Activated CD8-positive, alpha-beta T cell treated with anti-CD3 and anti-CD28 coated beads for 36 hours (primary cell): ENCODE measurements at regions of chr2 and their contacts with region 1.

Region 1: DNA sequence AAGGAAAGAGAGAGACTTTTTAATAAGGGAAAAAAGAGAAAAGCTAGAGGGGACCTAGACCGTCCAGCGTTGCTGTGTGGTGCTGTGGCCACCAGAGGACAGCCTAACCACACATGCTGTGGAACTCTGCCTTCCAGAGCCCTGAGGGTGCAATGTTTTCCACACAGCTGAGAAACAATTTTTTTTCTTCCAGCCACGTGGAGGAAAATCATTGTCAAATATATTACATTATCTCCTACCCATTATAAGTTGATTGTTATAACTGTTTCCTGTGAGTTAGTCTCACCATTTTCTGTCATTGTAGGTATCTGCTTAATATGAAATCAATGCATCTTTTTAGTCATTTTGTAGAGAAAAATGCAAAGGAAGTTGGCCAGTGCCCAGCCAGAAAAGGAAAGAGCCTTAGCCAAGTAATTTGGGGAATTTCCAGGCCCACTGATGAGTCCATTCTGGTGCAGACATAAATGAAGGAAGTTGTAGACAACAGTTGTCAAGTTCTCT is 5.9 kb upstream of the MRPL19 start:
- DNase-seq: peak; percentile 77
- ATAC-seq: peak; percentile 100
- H3K4me3 Mint-ChIP-seq: no peak overlapping the region
- H3K27ac Mint-ChIP-seq: no peak overlapping the region
- H3K4me1 Mint-ChIP-seq: peaks cover 6% of the 10 kb centered on the region
- H3K27me3 Mint-ChIP-seq: peaks cover 16% of the 10 kb centered on the region
- CTCF ChIP-seq: peak; percentile 92

Region 2: DNA sequence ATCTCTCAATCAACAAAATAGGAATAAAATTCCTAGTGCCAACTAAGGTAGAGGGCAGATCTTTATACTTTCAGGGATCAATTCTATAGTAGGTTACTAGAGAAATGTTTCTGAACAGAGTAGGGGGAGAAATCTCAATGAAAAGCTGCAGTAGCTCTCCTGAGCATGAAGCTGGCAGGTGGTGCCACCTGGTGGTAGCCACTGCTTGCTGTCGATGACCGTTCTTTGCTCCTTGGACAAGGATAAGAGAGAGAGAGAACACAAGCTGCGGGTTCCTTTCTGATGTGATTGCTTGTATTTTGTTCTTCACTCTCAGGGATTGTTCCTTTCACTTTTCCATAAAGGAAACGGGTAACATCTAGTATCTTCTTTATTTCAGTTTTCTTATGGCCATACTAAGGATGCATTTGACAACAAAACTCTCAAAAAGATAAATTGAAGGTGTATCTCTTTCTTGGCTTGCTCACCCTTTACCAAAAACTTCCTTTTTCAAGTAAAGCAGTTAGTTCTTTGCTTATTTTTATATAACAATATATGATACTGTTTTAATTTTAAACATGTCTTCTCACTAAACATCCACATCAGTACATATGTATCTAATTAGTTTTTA is 12.7 kb before region 1 on chr2:
- CTCF ChIA-PET with region 1: interaction called, 34 read pairs
- POLR2A ChIA-PET with region 1: no interaction called
- intact Hi-C with region 1: no loop called
- DNase-seq: peak; percentile 82
- ATAC-seq: peak; percentile 80
- H3K4me3 Mint-ChIP-seq: no peak overlapping the region
- H3K27ac Mint-ChIP-seq: no peak overlapping the region
- H3K4me1 Mint-ChIP-seq: no peaks in the 10 kb centered on the region
- H3K27me3 Mint-ChIP-seq: peaks cover 25% of the 10 kb centered on the region
- CTCF ChIP-seq: peak; percentile 76

Region 3: DNA sequence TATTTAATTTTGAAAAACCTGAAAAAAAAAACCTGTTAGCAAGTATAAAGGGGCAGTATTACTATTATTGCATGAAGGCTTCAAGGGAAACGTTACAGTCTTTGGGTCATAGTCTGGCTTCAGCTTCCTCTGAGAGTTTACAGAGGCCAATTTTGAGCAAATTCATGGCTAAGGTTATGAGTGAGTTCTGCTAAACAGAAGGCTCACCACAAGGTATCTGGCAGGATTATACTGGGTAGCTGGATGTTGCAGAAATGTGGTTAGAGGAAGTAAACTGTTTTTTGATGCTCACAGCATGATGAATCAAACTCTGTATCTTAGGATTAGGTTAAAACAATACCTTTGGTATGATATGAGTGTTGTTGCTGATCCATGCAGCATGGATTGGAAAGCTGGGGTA is 15.2 kb after region 1 on chr2:
- CTCF ChIA-PET with region 1: interaction called, 15 read pairs
- POLR2A ChIA-PET with region 1: no interaction called
- intact Hi-C with region 1: no loop called
- DNase-seq: no peak
- ATAC-seq: no peak
- H3K4me3 Mint-ChIP-seq: no peak overlapping the region
- H3K27ac Mint-ChIP-seq: no peak overlapping the region
- H3K4me1 Mint-ChIP-seq: peaks cover 24% of the 10 kb centered on the region
- H3K27me3 Mint-ChIP-seq: no peaks in the 10 kb centered on the region
- CTCF ChIP-seq: no peak

Region 4: DNA sequence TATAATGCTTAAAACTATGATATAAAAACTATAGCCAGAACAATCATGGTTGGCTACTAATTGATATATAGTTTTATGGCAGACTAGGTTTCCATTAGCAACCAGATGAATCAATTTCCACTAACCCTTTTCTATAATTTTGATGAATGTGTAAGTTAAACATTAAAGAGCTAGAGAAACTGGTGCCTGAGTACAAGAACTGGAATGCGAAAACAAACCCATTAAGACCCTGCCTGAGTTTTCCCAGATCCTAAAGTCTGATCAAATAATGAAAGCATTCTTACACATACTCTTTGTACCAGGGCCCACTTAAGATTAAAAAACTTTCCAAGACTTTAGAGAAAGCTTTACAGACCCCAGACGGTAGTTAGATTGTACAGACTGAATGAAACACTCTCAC is 27.2 kb after region 1 on chr2:
- CTCF ChIA-PET with region 1: interaction called, 11 read pairs
- POLR2A ChIA-PET with region 1: no interaction called
- intact Hi-C with region 1: no loop called
- DNase-seq: no peak
- ATAC-seq: no peak
- H3K4me3 Mint-ChIP-seq: no peak overlapping the region
- H3K27ac Mint-ChIP-seq: no peak overlapping the region
- H3K4me1 Mint-ChIP-seq: no peaks in the 10 kb centered on the region
- H3K27me3 Mint-ChIP-seq: no peaks in the 10 kb centered on the region
- CTCF ChIP-seq: no peak

Region 5: DNA sequence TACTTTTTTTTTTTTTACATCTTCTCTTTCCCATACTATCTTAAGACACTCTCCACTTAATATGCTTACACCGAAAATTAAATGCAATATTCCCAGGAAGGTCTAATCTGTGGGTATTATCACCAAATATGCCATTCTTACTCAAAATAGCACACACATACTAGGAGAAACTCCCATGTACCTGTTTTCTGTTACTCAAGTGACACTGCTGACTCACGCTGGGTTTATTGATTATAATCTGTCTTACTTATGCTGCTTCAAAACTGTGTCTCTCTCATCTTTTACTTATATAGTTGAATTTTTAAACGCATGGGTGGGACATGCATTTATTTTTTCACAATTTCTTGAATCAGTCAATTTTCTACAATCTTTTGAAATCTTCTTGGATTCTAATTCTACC is 35.8 kb after region 1 on chr2:
- CTCF ChIA-PET with region 1: interaction called, 64 read pairs
- POLR2A ChIA-PET with region 1: no interaction called
- intact Hi-C with region 1: loop called (anchors 5 kb)
- DNase-seq: no peak
- ATAC-seq: no peak
- H3K4me3 Mint-ChIP-seq: no peak overlapping the region
- H3K27ac Mint-ChIP-seq: no peak overlapping the region
- H3K4me1 Mint-ChIP-seq: peaks cover 7% of the 10 kb centered on the region
- H3K27me3 Mint-ChIP-seq: no peaks in the 10 kb centered on the region
- CTCF ChIP-seq: no peak

Region 6: DNA sequence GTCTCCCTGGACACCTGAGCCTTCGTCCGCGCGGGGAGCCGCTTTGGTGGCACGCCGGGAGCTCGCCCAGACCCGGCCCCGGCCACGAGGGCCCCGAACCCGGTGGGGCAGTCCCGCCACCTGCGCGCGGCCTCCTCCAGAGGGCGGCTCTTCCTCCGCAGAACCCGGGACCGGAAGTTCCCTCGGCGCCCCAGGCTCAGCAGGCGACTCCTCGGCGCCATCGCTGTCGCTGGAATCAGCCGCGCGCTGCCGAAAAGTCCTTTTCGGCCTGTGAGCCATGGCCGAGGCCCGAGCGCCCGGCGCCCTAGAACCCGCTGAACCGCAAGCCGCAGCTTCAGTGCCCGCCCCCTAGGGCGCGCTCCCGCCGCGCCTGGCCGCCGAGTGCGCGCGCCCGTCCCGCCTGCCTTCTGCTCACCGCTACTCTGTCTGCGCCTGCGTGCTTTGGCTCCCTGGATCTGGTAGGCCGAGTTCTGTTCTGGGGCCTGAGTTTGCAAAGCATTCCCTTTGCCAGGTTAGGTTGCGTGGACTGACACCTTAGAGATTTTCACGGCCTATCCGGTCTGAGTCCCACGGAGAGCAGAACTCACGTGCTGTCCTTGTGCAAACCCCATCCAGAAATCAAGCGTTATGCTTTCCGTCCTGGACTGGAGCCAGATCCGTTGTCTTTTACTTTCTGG is 70.0 kb after region 1 on chr2 and contains the start of gene GCFC2:
- CTCF ChIA-PET with region 1: interaction called, 14 read pairs
- POLR2A ChIA-PET with region 1: interaction called, 3 read pairs
- intact Hi-C with region 1: no loop called
- DNase-seq: peak; percentile 87
- ATAC-seq: peak; percentile 92
- H3K4me3 Mint-ChIP-seq: peak within 1 kb of the TSS; percentile 76
- H3K27ac Mint-ChIP-seq: peak within 1 kb of the TSS; percentile 96
- H3K4me1 Mint-ChIP-seq: peaks cover 28% of the 10 kb centered on the region
- H3K27me3 Mint-ChIP-seq: peaks cover 2% of the 10 kb centered on the region
- CTCF ChIP-seq: no peak
- total RNA-seq, gene GCFC2: 29.8 to 36.1 TPM